CD8-positive, alpha-beta memory T cell (primary cell): ENCODE measurements at regions of chr12 and their contacts with region 1.

Region 1: DNA sequence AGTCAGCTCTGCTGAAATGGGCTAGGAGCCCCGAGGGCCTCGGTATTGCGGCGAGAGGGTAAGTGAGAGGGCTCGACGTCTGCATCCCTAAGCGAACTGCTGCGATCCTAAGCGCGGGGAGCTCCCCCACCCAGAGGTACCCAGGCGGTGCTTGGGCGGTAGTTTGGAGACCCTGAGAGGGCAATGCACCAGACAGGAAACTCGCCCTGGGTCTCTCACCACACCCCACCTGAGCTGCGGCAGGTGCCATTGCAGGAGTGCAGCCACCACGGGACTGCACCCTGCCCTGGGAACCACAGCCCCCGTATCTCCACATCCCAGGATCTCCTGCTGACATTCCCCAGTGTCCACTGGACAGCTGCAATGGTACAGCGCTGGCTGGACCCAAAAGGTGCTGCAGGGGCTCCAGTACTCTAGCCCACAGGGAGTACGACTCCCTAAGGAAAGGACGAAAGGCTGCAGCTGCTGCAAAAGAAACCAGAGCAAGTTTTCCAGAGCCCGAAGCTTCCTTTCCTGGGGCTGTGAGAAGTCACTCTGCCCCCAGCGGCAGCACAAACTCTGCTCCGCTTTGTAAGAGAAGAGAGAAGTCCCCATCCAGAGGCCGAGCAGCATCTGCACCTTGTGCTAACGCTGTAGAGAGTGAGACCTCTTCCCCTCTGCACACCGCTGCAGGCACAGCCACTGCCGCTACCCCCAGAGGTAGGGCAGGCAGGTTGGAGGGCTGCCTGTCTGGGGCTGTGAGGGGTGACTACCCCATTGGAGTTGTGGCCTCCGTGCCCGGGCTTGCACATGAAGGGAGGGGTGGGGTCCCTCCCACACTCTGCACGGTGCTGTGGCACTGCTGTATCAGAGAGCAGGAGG is 31.1 kb upstream of the MON2 start:
- DNase-seq: peak; percentile 5 to 48 (median 19)
- H3K4me3 ChIP-seq: peak overlapping the region; percentile 64
- H3K4me3 Mint-ChIP-seq: peak overlapping the region; percentile 78 to 90 (median 86)
- H3K27ac ChIP-seq: no peak overlapping the region
- H3K27ac Mint-ChIP-seq: peak overlapping the region in 2 of 8 donors; percentile 14 to 72
- H3K4me1 ChIP-seq: peaks cover 15% of the 10 kb centered on the region
- H3K4me1 Mint-ChIP-seq: peaks cover 19 to 23% (median 23%) of the 10 kb centered on the region in 3 donors
- H3K27me3 ChIP-seq: peaks cover 18% of the 10 kb centered on the region
- H3K27me3 Mint-ChIP-seq: peaks cover 24 to 41% of the 10 kb centered on the region in 2 donors

Region 2: GRCh38 chr12:62466594-62467491 is 31.3 kb after region 1 on chr12 and contains the start of gene MON2:
- CTCF ChIA-PET with region 1: interaction called, 10 read pairs
- POLR2A ChIA-PET with region 1: no interaction called
- DNase-seq: peak; percentile 85 to 92 (median 86)
- H3K4me3 ChIP-seq: peak within 1 kb of the TSS; percentile 82
- H3K4me3 Mint-ChIP-seq: peak within 1 kb of the TSS; percentile 83 to 99 (median 95)
- H3K27ac ChIP-seq: peak within 1 kb of the TSS; percentile 96
- H3K27ac Mint-ChIP-seq: peak within 1 kb of the TSS; percentile 84 to 99 (median 97)
- H3K4me1 ChIP-seq: peaks cover 31% of the 10 kb centered on the region
- H3K4me1 Mint-ChIP-seq: peaks cover 22 to 37% (median 33%) of the 10 kb centered on the region in 3 donors
- H3K27me3 ChIP-seq: no peaks in the 10 kb centered on the region
- H3K27me3 Mint-ChIP-seq: no peaks in the 10 kb centered on the region
- total RNA-seq, gene MON2: 27.9 to 29.7 TPM

Region 3: DNA sequence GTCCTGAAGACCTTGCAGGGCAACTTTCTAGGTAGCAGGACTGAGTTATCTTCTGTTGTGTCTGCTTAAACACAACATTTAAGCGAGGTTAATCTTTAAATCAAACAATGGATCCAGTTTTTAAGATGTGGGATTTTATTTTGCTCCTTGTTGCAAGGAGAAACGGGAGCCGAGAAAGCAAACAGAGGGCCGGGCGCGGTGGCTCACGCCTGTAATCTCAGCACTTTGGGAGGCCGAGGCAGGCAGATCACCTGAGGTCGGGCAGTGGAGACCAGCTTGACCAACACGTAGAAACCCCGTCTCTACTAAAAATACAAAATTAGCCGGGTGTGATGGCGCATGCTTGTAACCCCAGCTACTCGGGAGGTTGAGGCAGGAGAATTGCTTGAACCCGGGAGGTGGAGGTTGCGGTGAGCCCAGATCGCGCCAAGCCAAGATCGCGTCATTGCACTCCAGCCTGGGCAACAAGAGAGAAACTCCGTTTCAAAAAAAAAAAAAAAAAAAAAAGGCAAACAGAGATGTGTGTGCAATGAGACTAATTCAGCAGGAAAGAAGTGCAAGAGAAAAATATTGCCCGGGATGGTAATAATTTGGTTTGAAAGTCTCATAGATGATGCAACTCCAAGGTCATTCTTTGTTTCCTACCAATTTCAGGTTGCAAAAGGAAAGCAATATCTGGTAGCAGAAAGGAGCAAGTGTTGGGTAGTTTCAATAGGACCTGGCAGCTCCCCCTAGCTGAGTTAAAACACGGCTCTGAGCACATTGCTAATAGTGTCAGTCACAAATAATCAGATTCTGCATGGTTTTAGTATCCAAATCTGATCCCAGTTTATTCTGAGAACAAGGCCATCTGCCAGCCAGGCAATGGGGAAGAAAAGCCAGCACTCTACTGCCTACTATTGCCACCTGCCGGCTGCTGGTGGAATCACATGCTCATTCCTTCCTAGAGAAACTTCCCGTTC is 358.0 kb after region 1 on chr12:
- CTCF ChIA-PET with region 1: interaction called, 51 read pairs
- POLR2A ChIA-PET with region 1: no interaction called
- DNase-seq: peak; percentile 45 to 80 (median 56)
- H3K4me3 ChIP-seq: no peak overlapping the region
- H3K4me3 Mint-ChIP-seq: no peak overlapping the region
- H3K27ac ChIP-seq: no peak overlapping the region
- H3K27ac Mint-ChIP-seq: no peak overlapping the region
- H3K4me1 ChIP-seq: no peaks in the 10 kb centered on the region
- H3K4me1 Mint-ChIP-seq: no peaks in the 10 kb centered on the region
- H3K27me3 ChIP-seq: no peaks in the 10 kb centered on the region
- H3K27me3 Mint-ChIP-seq: peaks cover 2 to 12% of the 10 kb centered on the region in 2 donors

Region 4: DNA sequence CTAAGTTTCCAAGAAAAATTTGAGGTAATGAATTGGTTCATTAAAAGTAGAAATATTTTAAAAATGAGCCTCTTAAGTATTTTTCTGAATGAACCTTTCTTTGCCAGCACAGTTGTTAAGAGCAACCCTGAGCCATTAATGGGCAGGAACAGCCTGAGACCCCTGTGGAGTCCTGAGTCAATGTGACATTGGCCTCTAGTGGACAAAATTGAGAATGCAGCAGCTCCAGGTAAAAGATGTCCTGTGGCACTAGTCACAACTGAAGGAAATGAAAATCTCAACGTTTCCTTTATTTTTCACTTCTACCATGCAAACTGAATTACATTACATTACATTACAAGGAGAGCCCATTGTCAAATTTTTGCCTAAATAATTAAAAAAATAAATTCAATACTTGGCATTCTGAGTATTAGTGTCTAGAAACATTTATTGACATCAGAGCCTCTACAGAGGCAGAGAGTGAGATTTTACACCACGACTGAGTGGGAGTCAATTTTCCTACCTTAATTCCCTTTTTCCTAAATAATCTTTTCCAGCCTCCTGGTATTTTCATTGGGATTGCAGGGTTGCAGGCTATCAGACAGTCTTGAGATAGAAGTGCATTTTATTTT is 363.7 kb after region 1 on chr12:
- CTCF ChIA-PET with region 1: interaction called, 51 read pairs
- POLR2A ChIA-PET with region 1: no interaction called
- DNase-seq: peak; percentile 19 to 65 (median 27)
- H3K4me3 ChIP-seq: no peak overlapping the region
- H3K4me3 Mint-ChIP-seq: no peak overlapping the region
- H3K27ac ChIP-seq: no peak overlapping the region
- H3K27ac Mint-ChIP-seq: peak overlapping the region in 1 of 8 donors; percentile 7
- H3K4me1 ChIP-seq: no peaks in the 10 kb centered on the region
- H3K4me1 Mint-ChIP-seq: no peaks in the 10 kb centered on the region
- H3K27me3 ChIP-seq: no peaks in the 10 kb centered on the region
- H3K27me3 Mint-ChIP-seq: peaks cover 9 to 20% of the 10 kb centered on the region in 2 donors